Testis (tissue), 5 donors: ENCODE measurements at regions of chr12 and their contacts with region 1.

Region 1: DNA sequence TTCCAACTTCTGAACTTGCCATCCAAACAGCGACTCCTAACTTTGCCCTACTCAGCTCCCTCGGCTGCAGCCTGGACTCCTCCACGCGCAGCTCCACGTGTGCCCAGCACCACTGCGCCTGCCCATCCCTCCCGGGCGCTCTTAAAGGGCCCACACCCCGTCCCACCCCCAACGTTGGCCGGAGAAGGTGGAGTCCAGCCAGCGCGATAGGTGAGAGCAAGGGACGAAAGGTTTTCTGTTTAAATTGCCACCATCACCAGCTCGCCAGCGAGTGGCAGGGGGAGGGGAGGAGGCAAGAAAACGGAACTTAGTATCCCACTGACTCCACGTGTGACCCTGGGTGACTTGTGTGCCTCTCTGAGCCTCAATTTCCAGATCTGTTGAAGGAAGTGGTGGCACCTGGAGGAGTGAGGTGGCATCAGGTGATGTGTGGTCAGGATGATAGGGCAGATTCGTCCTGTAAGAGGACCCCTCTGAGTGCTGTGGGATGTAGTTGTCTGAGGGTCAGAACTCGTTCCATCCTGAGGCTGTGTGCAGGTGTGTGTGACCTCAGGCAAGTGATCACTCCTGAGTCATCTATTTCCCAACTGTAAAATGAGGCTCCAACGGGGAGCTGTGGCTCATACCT is 59.7 kb downstream of the TRPV4 start:
- DNase-seq: peak; percentile 58
- H3K4me3 ChIP-seq: no peak overlapping the region
- H3K27ac ChIP-seq: no peak overlapping the region
- H3K4me1 ChIP-seq: peaks cover 19% of the 10 kb centered on the region
- H3K27me3 ChIP-seq: no peaks in the 10 kb centered on the region
- CTCF ChIP-seq: no peak
- POLR2A ChIP-seq: no peak

Region 2: DNA sequence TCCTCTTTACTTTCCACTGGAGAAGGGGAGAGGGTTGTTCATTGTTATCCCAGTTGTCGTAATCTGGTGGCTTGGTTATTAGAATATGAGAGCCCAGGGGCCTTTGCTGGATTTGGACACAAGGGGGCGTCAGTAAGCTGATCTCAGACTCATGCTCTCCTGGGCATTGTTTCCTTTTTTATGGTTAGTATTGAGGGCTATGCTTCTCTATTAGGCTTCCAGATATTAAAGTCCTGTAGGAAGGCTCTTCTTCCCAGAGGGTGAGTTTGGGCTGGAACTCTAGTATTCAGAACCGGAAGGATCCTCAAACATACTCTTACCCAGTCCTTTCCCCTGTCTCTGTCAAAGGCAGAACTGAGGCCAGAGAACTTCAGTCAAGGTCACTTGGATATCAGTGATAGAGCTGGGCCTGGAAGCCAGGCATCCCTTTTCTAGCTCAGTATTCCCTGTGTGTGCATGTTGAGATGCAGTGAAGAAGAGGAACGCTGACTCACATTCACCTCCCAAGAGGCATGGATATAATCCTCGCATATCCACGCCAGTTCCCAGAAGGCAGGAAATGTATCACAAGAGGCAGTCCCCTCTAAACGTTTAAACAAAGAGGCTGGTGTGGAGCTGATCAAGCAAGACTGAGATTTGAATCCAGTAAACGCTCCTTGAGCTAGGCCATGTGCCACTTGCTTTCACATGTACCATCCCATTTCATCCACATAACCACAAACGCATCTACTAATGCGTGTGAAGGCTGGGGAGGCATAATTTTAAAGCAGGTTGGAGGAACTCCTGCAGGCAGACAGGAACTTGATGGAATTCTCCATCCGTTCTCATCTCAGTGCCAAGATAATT is 254.5 kb before region 1 on chr12:
- intact Hi-C with region 1: loop called (anchors 5 kb)
- DNase-seq: peak; percentile 87
- H3K4me3 ChIP-seq: no peak overlapping the region
- H3K27ac ChIP-seq: peak overlapping the region in 1 of 2 donors; percentile 70
- H3K4me1 ChIP-seq: peaks cover 9% of the 10 kb centered on the region
- H3K27me3 ChIP-seq: no peaks in the 10 kb centered on the region
- CTCF ChIP-seq: peak; percentile 68 to 87 (median 85)
- POLR2A ChIP-seq: no peak

Region 3: DNA sequence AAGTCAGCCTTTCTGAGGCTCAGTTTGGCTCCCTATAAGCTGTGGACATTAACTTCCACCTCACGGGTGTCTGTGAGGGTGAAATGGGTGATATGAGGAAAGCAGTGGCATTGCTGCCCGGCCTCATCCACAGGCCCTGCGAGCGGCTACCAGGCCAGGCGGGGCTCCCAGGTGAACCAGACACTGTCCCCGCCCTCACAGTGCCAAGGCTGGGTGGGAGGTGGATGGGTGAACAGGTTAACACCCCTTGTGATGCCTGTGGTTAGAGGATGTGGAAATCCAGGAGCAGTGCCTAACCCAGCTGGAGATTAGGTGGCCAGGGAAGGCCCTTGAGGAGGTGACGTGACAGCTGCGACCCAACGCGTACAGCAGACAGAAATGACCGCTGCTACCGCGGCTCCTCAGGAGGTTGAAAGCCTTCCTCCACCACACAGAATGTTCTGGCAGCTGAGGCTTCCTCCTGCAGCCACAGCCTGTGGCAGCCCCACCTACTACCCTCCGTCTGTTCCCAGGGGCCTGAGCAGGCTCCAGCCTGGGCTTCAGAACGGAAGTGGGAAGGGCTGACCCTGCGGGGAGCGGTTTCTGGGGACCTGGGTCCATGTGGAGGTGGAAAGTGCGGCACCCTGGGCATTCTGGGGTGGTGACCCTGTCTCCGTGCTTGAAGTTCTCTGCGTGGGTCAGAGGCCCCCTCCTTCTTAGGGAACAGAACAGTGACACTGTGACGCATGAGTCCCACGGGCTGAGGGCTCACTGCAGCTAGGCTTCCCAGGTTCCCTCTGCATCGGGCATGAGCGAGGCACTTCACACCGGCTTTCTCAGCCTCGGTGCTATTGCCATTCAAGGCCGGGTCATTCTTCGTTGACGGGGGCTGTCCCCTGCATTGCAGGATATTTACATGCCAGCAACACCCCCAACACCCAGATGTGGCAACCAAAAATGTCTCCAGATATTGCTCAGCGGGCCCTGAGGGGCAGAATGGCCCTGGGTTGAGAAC is 209.9 kb before region 1 on chr12:
- intact Hi-C with region 1: no loop called
- DNase-seq: peak; percentile 28
- H3K4me3 ChIP-seq: no peak overlapping the region
- H3K27ac ChIP-seq: peak overlapping the region in 1 of 2 donors; percentile 37
- H3K4me1 ChIP-seq: peaks cover 10% of the 10 kb centered on the region
- H3K27me3 ChIP-seq: no peaks in the 10 kb centered on the region
- CTCF ChIP-seq: no peak
- POLR2A ChIP-seq: no peak

Region 4: DNA sequence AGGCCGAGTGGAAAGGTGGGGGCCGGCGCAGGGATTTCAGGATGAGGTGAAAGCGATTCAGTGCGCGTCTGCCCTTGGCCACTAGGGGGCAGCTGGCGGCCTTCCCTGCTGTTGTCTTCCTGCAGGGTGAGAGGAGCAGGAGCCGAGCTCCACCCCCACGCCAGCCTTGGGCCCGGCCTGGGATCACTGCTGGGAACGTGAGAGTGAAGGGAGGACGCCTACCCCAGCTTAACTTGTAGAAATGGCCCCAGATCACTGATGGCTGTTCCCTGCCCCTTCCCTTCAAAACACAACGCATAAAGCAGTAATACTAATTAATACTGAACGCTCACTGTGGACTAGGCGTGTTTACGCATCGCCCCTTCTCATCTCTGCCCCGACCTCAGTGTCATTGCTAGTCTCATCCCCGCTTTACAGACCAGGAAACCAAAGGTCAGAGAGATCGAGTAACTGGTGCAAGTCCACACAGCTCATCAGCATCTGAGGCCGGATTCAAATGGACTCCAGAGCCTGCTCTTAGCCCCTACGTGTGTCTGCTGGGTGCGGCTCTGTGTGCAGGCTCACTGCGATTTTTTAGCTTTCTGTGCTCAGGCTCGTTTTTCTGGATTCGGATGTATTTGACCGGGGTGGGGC is 175.6 kb before region 1 on chr12:
- intact Hi-C with region 1: loop called (anchors 5 kb)
- DNase-seq: peak; percentile 95
- H3K4me3 ChIP-seq: no peak overlapping the region
- H3K27ac ChIP-seq: no peak overlapping the region
- H3K4me1 ChIP-seq: peaks cover 7% of the 10 kb centered on the region
- H3K27me3 ChIP-seq: no peaks in the 10 kb centered on the region
- CTCF ChIP-seq: peak; percentile 96
- POLR2A ChIP-seq: no peak